ENCODE measurements at regions of chr1 and their contacts with region 1.

Region 1: GRCh38 chr1:44213222-44214112 is at the start of gene DMAP1:
- DNase-seq: peak; percentile 60 to 94
- H3K4me3 ChIP-seq: peak within 1 kb of the TSS; percentile 72 to 89 (median 82)
- H3K27ac ChIP-seq: peak within 1 kb of the TSS; percentile 49; the same call in 1 of the 2 replicates
- H3K4me1 ChIP-seq: peaks cover 0 to 7% (median 2%) of the 10 kb centered on the region in 4 experiments; a peak in 3 of 7 replicates
- H3K27me3 ChIP-seq: peaks cover 0 to 5% (median 2%) of the 10 kb centered on the region in 4 experiments; a peak in 2 of 7 replicates
- CTCF ChIP-seq: peak in 1 of 3 experiments; percentile 20; a peak in 1 of 4 replicates
- EP300 ChIP-seq: peak in 1 of 2 experiments; percentile 74; a peak in 1 of 3 replicates
- POLR2A ChIP-seq: peak in 1 of 2 experiments; percentile 71; a peak in 2 of 3 replicates
- RAD21 ChIP-seq: peak; percentile 37 to 52; a peak in 3 of 4 replicates
- total RNA-seq, gene DMAP1: 36.4 and 37.6 TPM in 2 replicates

Region 2: GRCh38 chr1:44089371-44090049 is 124.0 kb before region 1 on chr1:
- CTCF ChIA-PET with region 1: interaction called, 39 read pairs
- POLR2A ChIA-PET with region 1: interaction called, 6 read pairs
- DNase-seq: no peak
- H3K4me3 ChIP-seq: no peak overlapping the region
- H3K27ac ChIP-seq: no peak overlapping the region
- H3K4me1 ChIP-seq: peaks cover 8 to 19% (median 13%) of the 10 kb centered on the region in 4 experiments
- H3K27me3 ChIP-seq: peaks cover 0 to 2% (median 0%) of the 10 kb centered on the region in 4 experiments; a peak in 1 of 7 replicates
- CTCF ChIP-seq: no peak
- EP300 ChIP-seq: no peak
- POLR2A ChIP-seq: no peak
- RAD21 ChIP-seq: no peak

Region 3: DNA sequence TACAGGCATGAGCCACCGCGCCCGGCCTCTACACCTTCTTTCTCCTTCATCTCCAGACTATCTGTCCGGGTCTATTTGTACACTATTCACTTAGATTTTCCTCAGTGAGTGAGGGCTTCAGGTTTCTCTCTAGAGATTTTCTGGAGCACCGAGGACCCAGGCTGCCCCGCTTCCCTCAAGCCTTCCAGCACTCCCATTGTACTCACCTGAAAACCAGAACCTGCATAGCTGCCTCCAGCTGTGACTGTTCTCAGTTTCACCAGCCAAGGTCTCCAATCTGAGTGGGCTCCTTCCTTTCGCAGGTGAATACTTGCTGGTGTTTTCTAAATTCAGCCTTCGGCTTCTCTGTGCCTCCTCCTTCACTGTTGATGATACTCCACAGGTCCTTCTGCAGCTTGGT is 13.1 kb before region 1 on chr1:
- CTCF ChIA-PET with region 1: interaction called, 12 read pairs
- POLR2A ChIA-PET with region 1: interaction called, 10 read pairs
- DNase-seq: no peak
- H3K4me3 ChIP-seq: no peak overlapping the region
- H3K27ac ChIP-seq: no peak overlapping the region
- H3K4me1 ChIP-seq: no peaks in the 10 kb centered on the region
- H3K27me3 ChIP-seq: no peaks in the 10 kb centered on the region; a peak in 1 of 7 replicates
- CTCF ChIP-seq: no peak
- EP300 ChIP-seq: no peak
- POLR2A ChIP-seq: no peak
- RAD21 ChIP-seq: no peak

Region 4: DNA sequence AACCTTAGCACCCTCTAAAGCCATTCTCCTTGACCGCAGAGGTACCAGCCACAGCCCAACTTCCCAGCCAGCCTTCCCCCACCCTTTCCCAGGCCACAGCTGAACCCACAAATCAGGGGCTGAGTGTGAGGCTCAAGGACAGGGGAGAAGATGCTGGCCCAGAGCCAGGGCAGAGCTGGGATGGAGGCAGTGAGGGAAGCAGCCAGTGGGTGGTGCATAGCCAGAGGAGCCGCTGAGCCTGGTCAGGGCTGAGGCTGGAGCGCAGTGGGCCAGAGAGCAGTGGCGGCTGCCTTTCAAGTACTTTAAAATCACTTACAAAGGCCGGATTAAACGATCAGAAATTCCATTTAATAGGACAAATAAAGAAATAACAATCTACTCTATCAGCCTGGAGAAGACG is 36.1 kb after region 1 on chr1:
- CTCF ChIA-PET with region 1: interaction called, 14 read pairs
- POLR2A ChIA-PET with region 1: no interaction called
- DNase-seq: no peak
- H3K4me3 ChIP-seq: no peak overlapping the region
- H3K27ac ChIP-seq: no peak overlapping the region
- H3K4me1 ChIP-seq: peaks cover 0 to 2% (median 0%) of the 10 kb centered on the region in 4 experiments; a peak in 3 of 7 replicates
- H3K27me3 ChIP-seq: no peaks in the 10 kb centered on the region
- CTCF ChIP-seq: peak in 2 of 3 experiments; percentile 6 to 35; a peak in 2 of 4 replicates
- EP300 ChIP-seq: no peak
- POLR2A ChIP-seq: no peak
- RAD21 ChIP-seq: peak in 1 of 2 experiments; percentile 25; a peak in 3 of 4 replicates

Region 5: DNA sequence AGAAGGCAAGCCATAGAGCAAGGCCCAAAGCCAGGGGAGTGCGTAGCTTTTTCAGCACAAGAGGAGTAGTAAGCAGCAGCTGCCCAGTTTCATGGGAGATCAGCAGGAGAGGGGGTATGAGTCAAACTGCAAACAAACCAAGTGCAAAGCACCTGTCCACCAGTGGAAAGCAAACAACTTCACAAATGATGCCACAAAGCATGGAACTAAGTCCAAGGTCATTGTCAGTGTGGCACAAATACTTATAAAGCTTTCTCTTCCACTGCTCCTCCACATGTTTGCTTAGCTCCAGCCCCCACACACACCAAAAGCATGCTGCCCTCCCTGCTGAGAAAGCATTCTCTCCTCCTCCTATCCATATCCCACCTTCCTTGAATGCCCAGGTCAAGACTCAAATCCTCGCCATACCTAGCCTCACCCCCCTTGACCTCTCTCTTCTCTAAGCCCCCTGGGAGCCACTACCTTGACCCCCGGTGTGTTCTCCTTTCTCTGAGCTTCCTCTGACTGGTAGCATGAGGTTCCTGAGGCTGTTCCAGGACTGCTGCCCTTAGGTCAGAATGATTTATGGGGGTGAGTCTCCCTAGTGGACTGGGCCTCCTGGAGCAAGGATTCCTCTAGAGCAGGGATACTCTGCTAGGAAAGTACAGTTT is 70.2 kb after region 1 on chr1:
- CTCF ChIA-PET with region 1: interaction called, 250 read pairs
- POLR2A ChIA-PET with region 1: no interaction called
- DNase-seq: no peak
- H3K4me3 ChIP-seq: no peak overlapping the region
- H3K27ac ChIP-seq: no peak overlapping the region
- H3K4me1 ChIP-seq: no peaks in the 10 kb centered on the region
- H3K27me3 ChIP-seq: no peaks in the 10 kb centered on the region
- CTCF ChIP-seq: no peak
- EP300 ChIP-seq: no peak
- POLR2A ChIP-seq: no peak
- RAD21 ChIP-seq: no peak

Region 6: GRCh38 chr1:44318097-44319088 is 104.9 kb after region 1 on chr1:
- CTCF ChIA-PET with region 1: interaction called, 18 read pairs
- POLR2A ChIA-PET with region 1: no interaction called
- DNase-seq: peak; percentile 54 to 74
- H3K4me3 ChIP-seq: no peak overlapping the region; a peak in 1 of 8 replicates
- H3K27ac ChIP-seq: no peak overlapping the region
- H3K4me1 ChIP-seq: peaks cover 7 to 18% (median 15%) of the 10 kb centered on the region in 4 experiments; a peak in 5 of 7 replicates
- H3K27me3 ChIP-seq: peaks cover 0 to 2% (median 0%) of the 10 kb centered on the region in 4 experiments; a peak in 1 of 7 replicates
- CTCF ChIP-seq: peak; percentile 45 to 82 (median 61)
- EP300 ChIP-seq: peak in 1 of 2 experiments; percentile 54; a peak in 1 of 3 replicates
- POLR2A ChIP-seq: no peak
- RAD21 ChIP-seq: peak; percentile 51; a peak in 3 of 4 replicates

Region 7: DNA sequence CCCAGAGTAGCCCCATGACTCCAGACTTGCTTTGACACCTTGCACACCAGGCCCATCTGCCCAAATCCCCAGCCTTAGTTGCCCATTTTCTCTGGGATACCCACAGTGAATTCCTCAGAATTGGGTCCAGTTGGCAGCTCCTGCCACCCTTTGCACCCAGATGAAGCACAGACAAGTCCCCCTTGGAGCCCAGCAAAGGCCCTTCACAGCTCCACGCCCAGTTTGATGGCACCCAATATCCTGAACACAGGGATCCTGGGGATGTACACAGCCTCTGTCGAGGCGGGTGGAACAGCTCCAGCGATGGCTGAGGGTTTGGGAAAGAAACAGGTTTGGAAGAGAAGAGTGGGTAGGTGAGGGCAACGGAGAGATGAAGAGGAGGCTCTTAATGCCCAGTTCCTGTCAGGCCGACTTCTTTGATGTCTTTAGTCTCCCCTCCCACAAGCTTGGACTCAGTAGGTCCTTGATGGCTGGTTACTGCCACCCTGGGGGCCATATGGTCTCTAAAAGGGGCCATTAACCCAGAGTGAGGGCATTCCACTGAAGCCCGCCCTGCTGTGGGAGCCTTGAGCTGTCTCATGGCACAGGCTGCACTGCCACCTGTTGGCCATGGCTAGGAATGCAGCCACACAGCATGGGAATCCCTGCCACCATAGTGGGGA is 439.1 kb after region 1 on chr1:
- CTCF ChIA-PET with region 1: interaction called, 14 read pairs
- POLR2A ChIA-PET with region 1: no interaction called
- DNase-seq: peak; percentile 69 to 94
- H3K4me3 ChIP-seq: no peak overlapping the region
- H3K27ac ChIP-seq: 0 out of 2 replicates have a peak overlapping the region, but pooled peaks have one; percentile 20
- H3K4me1 ChIP-seq: peaks cover 0 to 17% (median 9%) of the 10 kb centered on the region in 4 experiments; a peak in 5 of 7 replicates
- H3K27me3 ChIP-seq: no peaks in the 10 kb centered on the region
- CTCF ChIP-seq: peak; percentile 94 to 100 (median 99)
- EP300 ChIP-seq: no peak
- POLR2A ChIP-seq: no peak
- RAD21 ChIP-seq: peak; percentile 93 to 95